Mammary epithelial cell (primary cell): ENCODE measurements at regions of chr4 and their contacts with region 1.

Region 1: DNA sequence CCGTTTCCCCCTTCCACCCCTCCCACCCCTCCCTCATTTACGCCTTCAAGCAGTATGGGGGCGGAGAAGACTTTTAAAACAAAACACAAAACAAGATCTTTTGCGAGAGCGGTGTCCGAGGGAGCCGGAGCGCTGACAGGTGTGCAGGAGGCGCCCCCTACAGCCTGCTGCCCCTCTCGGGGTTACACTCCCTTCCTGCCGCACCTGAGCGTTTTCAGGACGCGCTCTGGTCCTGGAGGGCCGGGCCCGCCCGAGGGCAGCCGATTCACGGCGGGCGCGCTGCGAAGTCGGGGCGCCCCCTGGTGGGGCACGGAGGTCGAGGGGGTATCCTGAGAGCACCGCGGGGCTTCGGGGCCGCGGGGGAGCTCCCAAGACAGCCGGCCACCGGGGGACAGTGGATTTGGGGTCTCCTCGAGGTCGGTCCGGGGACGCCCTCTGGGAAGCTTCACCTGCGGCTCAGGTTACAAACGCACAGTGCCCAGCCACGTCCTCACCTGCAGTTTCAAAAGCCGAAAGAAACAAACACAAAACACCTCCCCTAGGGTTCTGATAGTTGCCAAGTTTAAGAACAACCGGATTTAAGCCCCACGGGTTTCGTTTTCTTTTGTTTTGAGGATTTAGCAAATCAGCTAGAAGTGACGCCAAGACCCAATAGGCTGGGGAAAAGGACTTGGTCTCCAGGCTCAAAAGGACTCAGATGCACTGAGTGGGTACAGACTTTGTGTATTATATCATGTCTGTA is 8.0 kb upstream of the NEUROG2 start:
- DNase-seq: peak; percentile 67
- H3K4me3 ChIP-seq: peak overlapping the region; percentile 45 to 56 (median 49)
- H3K27ac ChIP-seq: no peak overlapping the region
- H3K4me1 ChIP-seq: peaks cover 4% of the 10 kb centered on the region
- H3K27me3 ChIP-seq: peaks cover 23% of the 10 kb centered on the region
- CTCF ChIP-seq: peak; percentile 55 to 87

Region 2: DNA sequence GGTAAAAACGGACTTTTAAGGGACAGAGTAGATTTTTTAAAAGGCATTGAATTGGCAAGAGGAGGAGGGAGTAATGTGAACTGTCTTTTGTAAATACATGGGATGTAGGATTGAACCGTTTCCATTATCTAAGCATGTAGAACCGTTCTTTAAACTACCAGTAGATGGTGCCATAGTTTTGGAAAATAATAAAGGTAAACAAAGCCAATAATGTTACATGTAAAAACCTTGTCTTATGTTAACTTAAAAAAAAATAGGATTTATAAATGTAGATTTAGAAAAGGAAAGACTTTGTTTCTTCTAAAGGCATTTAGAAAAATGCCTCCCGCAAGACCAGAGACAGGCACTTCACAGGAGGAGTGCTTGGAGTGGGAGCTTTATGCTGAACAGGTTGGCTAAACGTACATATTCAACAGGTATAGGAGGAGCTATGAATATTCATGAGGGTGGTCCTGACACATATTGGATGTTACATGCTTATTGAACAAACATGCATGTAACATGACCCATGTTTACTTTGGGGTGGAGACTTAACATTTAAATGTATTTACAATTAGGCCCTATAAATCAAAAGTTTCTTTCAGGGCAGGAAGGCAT is 424.1 kb before region 1 on chr4:
- CTCF ChIA-PET with region 1: no interaction called
- dilution Hi-C with region 1: no loop called
- in situ Hi-C with region 1: loop called in 1 of 2 experiments (anchors 25 kb)
- intact Hi-C with region 1: loop called (anchors 2 kb)
- DNase-seq: peak; percentile 37
- H3K4me3 ChIP-seq: no peak overlapping the region
- H3K27ac ChIP-seq: no peak overlapping the region
- H3K4me1 ChIP-seq: no peaks in the 10 kb centered on the region
- H3K27me3 ChIP-seq: no peaks in the 10 kb centered on the region
- CTCF ChIP-seq: peak; percentile 55 to 56

Region 3: DNA sequence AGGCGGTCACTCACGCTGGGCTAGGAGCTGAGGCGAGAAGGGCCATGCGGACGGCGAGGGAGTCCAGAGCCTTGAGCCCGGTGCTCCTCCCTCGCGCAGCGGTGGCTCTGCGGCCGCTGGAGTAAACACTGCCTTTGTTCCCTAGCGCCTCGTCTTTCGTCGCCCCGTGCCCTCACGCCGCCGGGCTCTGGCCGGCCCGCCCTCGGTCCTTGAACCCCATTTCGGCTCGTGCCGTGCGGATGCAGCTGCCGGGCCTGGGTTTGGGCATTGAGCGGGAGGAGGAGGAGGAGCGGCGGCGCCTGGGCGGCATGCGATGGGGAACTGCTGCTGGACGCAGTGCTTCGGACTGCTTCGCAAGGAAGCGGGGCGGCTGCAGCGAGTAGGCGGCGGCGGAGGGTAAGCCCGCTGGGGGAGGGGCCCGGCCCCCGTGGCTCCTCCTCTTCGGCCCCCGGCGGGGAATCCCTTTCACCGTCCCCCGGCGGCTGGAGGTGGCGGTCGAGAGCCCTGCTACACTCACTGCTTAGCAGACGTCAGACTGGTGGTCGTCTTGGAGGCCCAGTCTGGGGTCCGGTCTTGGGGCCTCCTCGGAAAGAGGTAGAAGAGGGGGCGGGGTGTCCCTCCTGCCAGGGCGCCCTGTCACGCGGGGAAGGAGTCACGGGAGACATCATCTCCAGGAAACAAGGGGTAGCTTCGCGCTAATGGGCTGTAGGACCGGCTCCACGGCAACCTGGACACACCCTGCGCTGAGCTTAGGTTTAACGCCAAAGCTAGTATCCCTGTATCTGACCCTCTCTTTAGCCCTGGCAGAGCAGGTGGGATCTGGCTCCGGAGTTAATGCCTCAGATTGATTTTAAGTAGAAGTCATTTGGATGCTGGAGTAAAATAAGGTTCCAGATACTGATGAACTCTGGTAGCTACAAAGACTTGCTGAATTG is 291.9 kb before region 1 on chr4 and contains the start of gene AP1AR:
- CTCF ChIA-PET with region 1: no interaction called
- dilution Hi-C with region 1: no loop called
- in situ Hi-C with region 1: no loop called
- intact Hi-C with region 1: loop called (anchors 1 kb)
- DNase-seq: peak; percentile 74
- H3K4me3 ChIP-seq: peak within 1 kb of the TSS; percentile 71 to 99 (median 94)
- H3K27ac ChIP-seq: peak within 1 kb of the TSS; percentile 91
- H3K4me1 ChIP-seq: peaks cover 3% of the 10 kb centered on the region
- H3K27me3 ChIP-seq: no peaks in the 10 kb centered on the region
- CTCF ChIP-seq: peak; percentile 11 to 41
- total RNA-seq, gene AP1AR: 24.6 to 27.3 TPM

Region 4: GRCh38 chr4:112321776-112322684 is 201.9 kb before region 1 on chr4:
- CTCF ChIA-PET with region 1: no interaction called
- dilution Hi-C with region 1: loop called (anchors 25 kb)
- in situ Hi-C with region 1: loop called in 1 of 2 experiments (anchors 25 kb)
- intact Hi-C with region 1: loop called (anchors 2 kb)
- DNase-seq: peak; percentile 32
- H3K4me3 ChIP-seq: no peak overlapping the region
- H3K27ac ChIP-seq: no peak overlapping the region
- H3K4me1 ChIP-seq: no peaks in the 10 kb centered on the region
- H3K27me3 ChIP-seq: no peaks in the 10 kb centered on the region
- CTCF ChIP-seq: peak; percentile 88 to 98

Region 5: DNA sequence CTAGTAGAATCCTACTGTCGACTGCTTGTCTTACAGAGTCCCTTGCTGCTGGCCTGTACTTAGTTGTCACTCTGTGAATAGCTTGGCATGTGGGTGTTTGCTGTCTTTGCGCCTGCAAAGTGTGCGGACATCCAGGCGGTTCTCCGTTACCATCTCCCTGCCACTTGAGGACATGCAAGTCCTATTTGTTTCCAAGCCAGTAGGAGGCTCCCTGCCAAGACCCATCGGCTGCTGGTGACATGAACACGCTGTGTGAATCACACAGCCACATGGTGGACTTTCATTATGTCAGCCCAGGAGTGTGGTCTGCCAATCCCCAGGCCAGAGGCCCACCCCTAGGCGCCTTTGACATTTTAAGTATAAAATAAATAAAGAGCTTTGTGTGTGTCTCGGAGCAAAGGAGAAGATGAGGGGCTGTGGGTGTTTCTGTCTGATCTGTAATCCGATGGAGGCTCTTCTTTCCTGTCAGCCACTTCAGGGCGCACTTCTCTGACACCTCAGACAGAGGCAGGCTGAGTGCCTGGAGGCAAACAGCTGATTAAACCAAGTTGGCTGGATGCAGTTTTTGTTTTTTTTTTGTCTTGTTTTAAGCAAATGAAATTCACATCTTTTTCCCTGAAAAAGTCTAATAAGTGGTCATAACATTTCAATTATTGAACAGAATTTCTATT is 175.3 kb before region 1 on chr4:
- CTCF ChIA-PET with region 1: interaction called, 3 read pairs
- dilution Hi-C with region 1: loop called (anchors 25 kb)
- in situ Hi-C with region 1: loop called (anchors 10 to 25 kb)
- intact Hi-C with region 1: loop called (anchors 1 kb)
- DNase-seq: peak; percentile 76
- H3K4me3 ChIP-seq: peak overlapping the region in 2 of 3 experiments; percentile 25 to 36
- H3K27ac ChIP-seq: no peak overlapping the region
- H3K4me1 ChIP-seq: peaks cover 8% of the 10 kb centered on the region
- H3K27me3 ChIP-seq: no peaks in the 10 kb centered on the region
- CTCF ChIP-seq: peak; percentile 31 to 65

Region 6: GRCh38 chr4:112648263-112649054 is 124.5 kb after region 1 on chr4:
- CTCF ChIA-PET with region 1: no interaction called
- dilution Hi-C with region 1: no loop called
- in situ Hi-C with region 1: no loop called
- intact Hi-C with region 1: no loop called
- DNase-seq: no peak
- H3K4me3 ChIP-seq: no peak overlapping the region
- H3K27ac ChIP-seq: no peak overlapping the region
- H3K4me1 ChIP-seq: no peaks in the 10 kb centered on the region
- H3K27me3 ChIP-seq: no peaks in the 10 kb centered on the region
- CTCF ChIP-seq: no peak

Region 7: DNA sequence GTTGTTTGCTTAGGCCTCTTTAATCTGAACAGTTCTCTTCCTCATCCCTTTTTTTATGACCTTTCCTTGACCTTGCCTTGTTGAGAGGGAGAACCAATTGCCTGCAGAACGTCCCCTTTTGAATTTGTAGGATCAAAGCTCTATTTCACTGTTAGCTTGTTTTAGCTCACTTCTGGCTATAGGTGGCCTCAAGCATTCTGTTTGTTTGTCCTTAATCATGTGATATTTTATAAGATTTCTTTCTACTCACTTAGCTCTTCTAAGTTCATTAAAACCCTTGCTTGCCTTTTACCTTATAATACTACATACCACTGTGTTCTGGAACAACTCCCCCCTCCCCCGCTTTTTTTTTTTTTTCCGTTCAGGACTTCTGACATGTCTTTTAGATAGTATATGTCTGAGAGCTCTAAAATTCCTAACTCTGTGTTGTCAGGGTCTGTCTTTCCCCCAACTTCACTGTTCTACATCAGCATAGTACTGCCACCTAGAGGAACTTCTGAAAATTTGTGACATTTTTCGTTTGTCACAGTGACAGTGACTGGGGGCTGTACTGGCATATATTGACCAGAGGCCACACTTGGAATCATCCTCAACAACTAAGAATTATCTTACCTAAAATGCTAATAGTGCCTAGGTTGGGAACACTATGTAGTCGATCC is 241.5 kb after region 1 on chr4:
- CTCF ChIA-PET with region 1: no interaction called
- dilution Hi-C with region 1: no loop called
- in situ Hi-C with region 1: no loop called
- intact Hi-C with region 1: loop called (anchors 5 kb)
- DNase-seq: no peak
- H3K4me3 ChIP-seq: no peak overlapping the region
- H3K27ac ChIP-seq: no peak overlapping the region
- H3K4me1 ChIP-seq: no peaks in the 10 kb centered on the region
- H3K27me3 ChIP-seq: peaks cover 2% of the 10 kb centered on the region
- CTCF ChIP-seq: peak; percentile 28 to 47